IMR-90 (cell line): ENCODE measurements at regions of chr9 and their contacts with region 1.

Region 1: GRCh38 chr9:95268681-95269080 is 48.8 kb downstream of the FANCC start:
- DNase-seq: peak; percentile 41
- ATAC-seq: peak; percentile 69
- H3K4me3 ChIP-seq: no peak overlapping the region
- H3K27ac ChIP-seq: no peak overlapping the region
- H3K4me1 ChIP-seq: peaks cover 4% of the 10 kb centered on the region; the same call in 1 of the 2 replicates
- H3K27me3 ChIP-seq: no peaks in the 10 kb centered on the region
- CTCF ChIP-seq: peak; percentile 49
- POLR2A ChIP-seq: no peak
- RAD21 ChIP-seq: peak; percentile 50

Region 2: GRCh38 chr9:94672811-94673487 is 595.7 kb before region 1 on chr9:
- CTCF ChIA-PET with region 1: no interaction called
- POLR2A ChIA-PET with region 1: no interaction called
- dilution Hi-C with region 1: no loop called
- in situ Hi-C with region 1: no loop called
- intact Hi-C with region 1: loop called (anchors 10 kb)
- DNase-seq: peak; percentile 67
- ATAC-seq: peak; percentile 68
- H3K4me3 ChIP-seq: no peak overlapping the region
- H3K27ac ChIP-seq: peak overlapping the region; percentile 19; the same call in 1 of the 2 replicates
- H3K4me1 ChIP-seq: peaks cover 9% of the 10 kb centered on the region; the same call in 1 of the 2 replicates
- H3K27me3 ChIP-seq: no peaks in the 10 kb centered on the region
- CTCF ChIP-seq: no peak
- POLR2A ChIP-seq: no peak
- RAD21 ChIP-seq: no peak

Region 3: DNA sequence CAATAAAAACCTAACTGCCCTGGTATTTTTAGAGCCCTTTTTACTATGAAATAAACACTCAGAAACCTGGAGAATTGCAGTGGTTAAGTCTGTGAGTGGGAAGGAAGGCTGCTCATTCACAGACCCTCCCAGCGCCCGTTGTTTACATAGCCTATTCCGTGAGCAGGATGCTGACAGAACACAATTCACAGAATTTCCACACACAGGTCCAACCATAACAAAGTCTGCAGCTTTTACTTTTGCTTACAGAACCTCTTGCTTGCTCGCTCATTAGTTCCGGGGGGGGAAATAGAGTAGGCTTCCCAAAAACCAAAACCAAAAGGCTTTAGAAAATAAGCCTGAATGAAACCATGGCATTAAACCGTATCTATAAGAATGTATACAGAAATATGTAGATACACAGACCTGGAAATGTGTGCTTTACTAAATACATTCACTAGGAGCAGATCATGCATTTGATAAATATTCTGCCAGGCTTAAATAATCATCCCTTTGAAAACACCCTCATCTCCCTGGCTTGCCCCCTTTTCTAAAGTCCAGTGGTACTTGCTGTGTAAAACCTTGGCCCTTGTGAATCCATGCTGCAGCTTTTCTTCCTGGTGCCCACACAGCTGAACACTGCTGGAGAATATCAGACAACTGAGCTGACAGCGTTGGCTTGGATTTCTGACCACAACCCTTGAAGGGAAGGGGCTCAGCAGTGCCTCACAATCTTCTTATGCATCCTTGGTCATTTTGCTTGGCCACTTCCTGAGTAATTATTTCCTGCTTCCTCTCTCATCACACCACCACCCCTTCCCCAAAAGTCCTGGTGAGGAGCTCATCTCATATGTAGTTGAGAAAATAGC is 79.2 kb before region 1 on chr9:
- CTCF ChIA-PET with region 1: no interaction called
- POLR2A ChIA-PET with region 1: no interaction called
- dilution Hi-C with region 1: no loop called
- in situ Hi-C with region 1: no loop called
- intact Hi-C with region 1: loop called (anchors 2 kb)
- DNase-seq: peak; percentile 91
- ATAC-seq: peak; percentile 96
- H3K4me3 ChIP-seq: peak overlapping the region; percentile 1; the same call in 1 of the 2 replicates
- H3K27ac ChIP-seq: peak overlapping the region; percentile 51; the same call in 1 of the 2 replicates
- H3K4me1 ChIP-seq: peaks cover 12% of the 10 kb centered on the region
- H3K27me3 ChIP-seq: no peaks in the 10 kb centered on the region
- CTCF ChIP-seq: no peak
- POLR2A ChIP-seq: no peak
- RAD21 ChIP-seq: no peak